Activated CD4-positive, alpha-beta memory T cell treated with anti-CD3 and anti-CD28 coated beads for 36 hours (primary cell): ENCODE measurements at regions of chr16 and their contacts with region 1.

Region 1: GRCh38 chr16:3023669-3024478 is at the starts of genes HCFC1R1 and THOC6:
- DNase-seq: peak; percentile 98
- H3K4me3 Mint-ChIP-seq: peak within 1 kb of the TSS; percentile 91
- H3K27ac Mint-ChIP-seq: peak within 1 kb of the TSS; percentile 96
- H3K4me1 Mint-ChIP-seq: peaks cover 45% of the 10 kb centered on the region
- H3K27me3 Mint-ChIP-seq: peaks cover under 1% of the 10 kb centered on the region
- total RNA-seq, gene HCFC1R1: 31.8 to 32.8 TPM
- total RNA-seq, gene THOC6: 41.2 to 42.7 TPM

Region 2: DNA sequence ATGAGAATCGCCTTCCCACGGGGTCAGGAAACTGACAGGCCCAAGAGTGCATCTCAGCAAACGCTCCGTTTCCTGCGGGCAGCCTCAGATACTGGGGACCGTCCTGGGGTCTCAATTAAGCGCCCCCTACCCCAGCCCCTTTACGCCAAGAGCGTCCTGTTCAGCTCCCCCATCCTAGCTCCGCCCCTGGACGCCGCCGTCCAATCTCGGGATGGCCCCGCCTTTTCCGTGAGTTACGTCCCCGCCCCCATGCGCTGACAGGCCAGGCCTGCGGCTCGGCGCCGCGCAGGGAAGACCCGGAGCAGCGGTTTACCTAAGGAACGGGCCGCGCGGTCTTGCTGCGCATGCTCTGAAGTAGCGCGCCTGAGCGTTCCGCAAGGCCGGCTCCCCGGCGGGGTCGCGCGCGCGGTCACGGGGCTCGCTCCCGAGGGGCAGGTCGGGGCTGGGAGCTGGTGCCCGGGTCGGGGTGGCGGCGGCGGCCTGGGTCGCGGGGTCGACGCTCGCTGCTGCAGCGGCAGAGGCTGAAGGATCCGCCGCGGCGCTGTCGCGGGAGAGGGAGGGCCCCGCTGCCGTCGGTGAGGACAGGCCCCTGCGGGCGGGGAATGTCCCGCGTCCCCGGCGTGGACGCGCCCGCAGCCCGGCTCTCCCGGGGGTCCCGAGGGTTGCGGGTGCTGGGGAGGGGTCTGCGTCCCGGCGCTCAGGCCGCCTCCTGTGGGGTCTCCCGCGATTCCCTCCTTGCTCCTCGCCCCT is 112.1 kb before region 1 on chr16 and contains the start of gene FLYWCH1:
- CTCF ChIA-PET with region 1: no interaction called
- POLR2A ChIA-PET with region 1: interaction called, 3 read pairs
- intact Hi-C with region 1: loop called (anchors 5 kb)
- DNase-seq: peak; percentile 99
- H3K4me3 Mint-ChIP-seq: peak within 1 kb of the TSS; percentile 87
- H3K27ac Mint-ChIP-seq: peak within 1 kb of the TSS; percentile 80
- H3K4me1 Mint-ChIP-seq: peaks cover 38% of the 10 kb centered on the region
- H3K27me3 Mint-ChIP-seq: no peaks in the 10 kb centered on the region
- total RNA-seq, gene FLYWCH1: 49.2 to 52.2 TPM

Region 3: GRCh38 chr16:3003582-3004302 is 20.1 kb before region 1 on chr16:
- CTCF ChIA-PET with region 1: interaction called, 412 read pairs
- POLR2A ChIA-PET with region 1: interaction called, 7 read pairs
- intact Hi-C with region 1: loop called (anchors 1 kb)
- DNase-seq: peak; percentile 99
- H3K4me3 Mint-ChIP-seq: peak overlapping the region; percentile 48
- H3K27ac Mint-ChIP-seq: peak overlapping the region; percentile 58
- H3K4me1 Mint-ChIP-seq: peaks cover 24% of the 10 kb centered on the region
- H3K27me3 Mint-ChIP-seq: peaks cover 5% of the 10 kb centered on the region

Region 4: GRCh38 chr16:3045357-3045728 is 21.5 kb after region 1 on chr16:
- CTCF ChIA-PET with region 1: interaction called, 89 read pairs
- POLR2A ChIA-PET with region 1: interaction called, 3 read pairs
- intact Hi-C with region 1: no loop called
- DNase-seq: peak; percentile 54
- H3K4me3 Mint-ChIP-seq: peak overlapping the region; percentile 68
- H3K27ac Mint-ChIP-seq: no peak overlapping the region
- H3K4me1 Mint-ChIP-seq: peaks cover 14% of the 10 kb centered on the region
- H3K27me3 Mint-ChIP-seq: peaks cover 30% of the 10 kb centered on the region

Region 5: GRCh38 chr16:3099732-3100499 is 76.0 kb after region 1 on chr16:
- CTCF ChIA-PET with region 1: interaction called, 7 read pairs
- POLR2A ChIA-PET with region 1: no interaction called
- intact Hi-C with region 1: loop called (anchors 2 kb)
- DNase-seq: peak; percentile 97
- H3K4me3 Mint-ChIP-seq: peak overlapping the region; percentile 65
- H3K27ac Mint-ChIP-seq: peak overlapping the region; percentile 54
- H3K4me1 Mint-ChIP-seq: peaks cover 39% of the 10 kb centered on the region
- H3K27me3 Mint-ChIP-seq: no peaks in the 10 kb centered on the region

Region 6: DNA sequence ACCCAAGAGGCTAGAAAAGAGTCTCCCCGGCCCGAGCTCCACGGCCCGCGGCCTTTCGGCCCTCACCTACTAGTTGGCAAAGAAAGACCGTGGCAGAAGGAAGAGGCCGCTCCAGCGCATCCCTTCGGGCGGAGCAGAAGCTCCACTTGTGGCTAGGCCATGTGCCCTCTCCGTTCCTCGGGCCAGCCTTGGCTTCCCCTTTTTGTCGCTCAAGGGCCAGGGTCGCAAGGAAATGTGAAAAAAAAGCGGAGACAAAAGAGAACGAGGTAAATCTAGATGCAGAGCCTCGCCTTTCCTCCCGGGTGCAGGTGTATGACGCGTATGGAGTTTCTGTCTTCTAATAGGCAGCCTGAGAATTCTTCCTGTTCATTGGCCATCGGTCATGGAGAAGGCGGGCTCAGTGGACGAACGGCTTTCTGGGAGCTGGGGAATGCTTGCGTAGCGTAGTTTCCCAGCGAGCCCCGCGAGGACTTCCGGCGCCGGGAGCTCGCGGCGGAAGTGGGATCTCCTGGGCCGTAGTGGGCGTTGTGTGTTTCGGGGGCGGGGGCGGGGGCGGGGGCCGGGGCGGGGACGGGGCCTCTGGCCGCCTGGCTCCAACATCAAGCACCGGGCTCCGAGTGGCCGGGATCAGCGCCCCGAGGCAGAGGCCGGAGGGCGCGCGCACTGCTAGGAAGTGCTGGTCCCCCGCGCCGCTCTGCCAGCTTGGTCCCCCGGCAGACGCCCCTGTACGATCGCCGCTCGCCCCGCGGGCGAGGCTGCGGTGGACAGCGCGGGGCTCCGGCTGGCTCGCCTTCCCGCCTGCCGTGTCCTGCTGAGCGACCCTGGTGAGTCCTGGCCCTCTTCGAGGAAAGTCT is 110.9 kb after region 1 on chr16 and contains the start of gene ZNF213:
- CTCF ChIA-PET with region 1: interaction called, 200 read pairs
- POLR2A ChIA-PET with region 1: interaction called, 4 read pairs
- intact Hi-C with region 1: no loop called
- DNase-seq: peak; percentile 96
- H3K4me3 Mint-ChIP-seq: peak within 1 kb of the TSS; percentile 96
- H3K27ac Mint-ChIP-seq: peak within 1 kb of the TSS; percentile 93
- H3K4me1 Mint-ChIP-seq: peaks cover 24% of the 10 kb centered on the region
- H3K27me3 Mint-ChIP-seq: no peaks in the 10 kb centered on the region
- total RNA-seq, gene ZNF213: 9.0 TPM

Region 7: GRCh38 chr16:3173892-3174617 is 150.2 kb after region 1 on chr16:
- CTCF ChIA-PET with region 1: interaction called, 10 read pairs
- POLR2A ChIA-PET with region 1: no interaction called
- intact Hi-C with region 1: no loop called
- DNase-seq: peak; percentile 57
- H3K4me3 Mint-ChIP-seq: peak overlapping the region; percentile 71
- H3K27ac Mint-ChIP-seq: peak overlapping the region; percentile 19
- H3K4me1 Mint-ChIP-seq: peaks cover 34% of the 10 kb centered on the region
- H3K27me3 Mint-ChIP-seq: peaks cover 51% of the 10 kb centered on the region